ENCODE measurements at regions of chr6 and their contacts with region 1.

Region 1: DNA sequence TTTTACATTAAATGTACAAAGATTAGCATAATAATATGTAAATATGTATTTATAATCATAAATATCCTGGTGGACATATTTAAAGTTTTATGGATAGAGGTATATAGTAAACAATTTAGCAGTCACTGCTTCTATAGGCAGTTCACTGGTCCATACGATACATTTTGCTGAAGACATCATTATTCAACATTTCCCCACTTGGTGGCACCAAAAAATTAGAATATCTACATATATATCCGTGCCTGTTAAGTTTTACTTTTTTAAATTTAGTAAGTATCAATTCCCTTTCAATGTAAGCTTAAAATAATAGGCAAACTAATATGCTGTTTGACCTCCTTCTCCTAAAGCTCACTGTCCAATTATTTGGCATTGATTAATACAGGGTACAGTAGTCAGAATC is 64.2 kb downstream of the LMBRD1 start:
- DNase-seq: no peak
- ATAC-seq: peak in 1 of 2 donors; percentile 45
- H3K4me3 ChIP-seq: no peak overlapping the region
- H3K27ac ChIP-seq: no peak overlapping the region
- H3K4me1 ChIP-seq: peaks cover 10 to 17% of the 10 kb centered on the region in 2 donors
- H3K27me3 ChIP-seq: no peaks in the 10 kb centered on the region
- CTCF ChIP-seq: no peak
- POLR2A ChIP-seq: no peak

Region 2: DNA sequence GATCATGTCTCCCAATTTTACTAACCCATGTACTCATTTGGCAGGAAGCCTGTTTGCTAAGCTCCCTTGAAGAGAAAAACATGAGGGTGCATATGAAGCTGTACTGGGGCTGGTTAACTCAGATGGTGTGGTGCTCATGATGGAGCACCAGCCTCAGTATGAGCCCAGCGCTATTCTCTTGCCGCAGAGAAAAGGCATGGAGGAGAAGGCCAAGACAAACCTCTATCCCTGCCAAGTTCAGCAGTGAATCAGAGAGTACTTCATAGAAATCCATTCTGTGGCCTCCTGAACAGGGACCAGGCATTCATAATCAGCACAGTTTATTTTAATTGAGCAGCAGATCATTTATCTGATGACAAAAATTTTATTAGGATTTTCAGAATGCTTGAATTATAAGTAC is 333.9 kb before region 1 on chr6:
- in situ Hi-C with region 1: no loop called
- intact Hi-C with region 1: no loop called
- DNase-seq: no peak
- ATAC-seq: no peak
- H3K4me3 ChIP-seq: no peak overlapping the region
- H3K27ac ChIP-seq: no peak overlapping the region
- H3K4me1 ChIP-seq: no peaks in the 10 kb centered on the region
- H3K27me3 ChIP-seq: no peaks in the 10 kb centered on the region
- CTCF ChIP-seq: no peak
- POLR2A ChIP-seq: no peak

Region 3: DNA sequence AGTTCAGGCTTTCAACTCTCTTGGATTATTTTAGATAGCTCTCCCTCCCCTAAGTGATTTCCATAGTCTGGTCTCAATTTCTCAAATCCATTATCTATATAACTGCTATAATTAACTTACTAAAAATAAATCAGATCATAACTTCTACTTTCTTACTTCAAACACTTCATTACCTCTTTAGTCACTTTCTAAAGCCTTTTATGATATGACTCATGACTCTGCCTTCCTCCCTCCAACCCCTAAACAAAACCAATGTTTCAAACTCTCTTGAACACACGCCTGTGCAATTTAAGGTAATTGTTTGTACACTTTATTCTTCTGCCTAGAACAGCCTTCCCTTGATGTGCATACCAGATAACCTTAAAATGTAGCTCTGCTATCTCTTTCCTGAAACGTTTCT is 36.4 kb before region 1 on chr6:
- in situ Hi-C with region 1: no loop called
- intact Hi-C with region 1: no loop called
- DNase-seq: no peak
- ATAC-seq: no peak
- H3K4me3 ChIP-seq: no peak overlapping the region
- H3K27ac ChIP-seq: no peak overlapping the region
- H3K4me1 ChIP-seq: no peaks in the 10 kb centered on the region
- H3K27me3 ChIP-seq: no peaks in the 10 kb centered on the region
- CTCF ChIP-seq: no peak
- POLR2A ChIP-seq: no peak

Region 4: GRCh38 chr6:69791065-69791471 is 58.4 kb after region 1 on chr6:
- in situ Hi-C with region 1: no loop called
- intact Hi-C with region 1: loop called (anchors 5 kb)
- DNase-seq: no peak
- ATAC-seq: peak; percentile 51 to 56
- H3K4me3 ChIP-seq: no peak overlapping the region
- H3K27ac ChIP-seq: peak overlapping the region; percentile 67 to 77 (median 74)
- H3K4me1 ChIP-seq: peaks cover 44 to 53% of the 10 kb centered on the region in 2 donors
- H3K27me3 ChIP-seq: no peaks in the 10 kb centered on the region
- CTCF ChIP-seq: no peak
- POLR2A ChIP-seq: no peak

Region 5: DNA sequence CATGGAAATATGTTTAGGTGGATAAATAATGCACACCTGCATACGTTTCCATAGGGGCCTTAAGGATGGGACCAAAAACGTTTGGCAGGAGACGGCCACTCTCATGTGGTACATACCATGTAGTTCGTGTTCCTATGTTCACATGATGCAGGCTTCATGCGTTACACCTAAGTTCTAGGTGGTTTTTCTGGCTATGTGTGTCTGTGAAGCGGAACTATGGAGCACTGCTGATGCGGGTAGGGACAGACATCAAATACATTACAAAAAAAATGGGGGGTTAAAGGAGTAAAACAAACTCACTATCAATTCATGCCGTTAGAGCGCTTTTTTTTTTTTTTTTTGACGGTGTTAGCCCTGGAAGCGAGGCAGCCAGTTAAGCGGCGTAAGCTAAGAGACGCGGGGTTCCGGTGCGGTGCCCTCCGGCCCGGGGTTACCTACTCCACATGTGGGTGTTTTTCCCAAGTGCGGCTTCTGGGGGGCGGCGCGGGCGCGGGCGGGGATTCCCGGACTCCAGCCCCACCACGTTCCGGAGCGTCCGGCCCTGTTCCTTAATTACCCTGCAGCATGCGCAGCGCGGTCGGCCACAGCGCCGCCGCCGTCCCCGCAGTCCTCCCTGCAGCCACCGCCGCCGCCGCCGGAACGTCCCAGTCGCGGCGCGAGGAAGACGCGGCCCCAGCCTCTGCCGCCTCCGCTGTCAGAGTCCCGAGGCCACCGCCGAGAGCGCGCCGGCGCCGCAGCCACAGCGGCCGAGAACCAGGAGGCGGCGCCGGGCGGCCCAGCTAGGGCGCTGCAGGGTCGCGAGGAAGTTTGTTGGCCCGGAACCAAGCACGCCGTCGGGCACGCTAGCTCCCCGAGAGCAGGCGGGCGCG is 134.4 kb after region 1 on chr6:
- in situ Hi-C with region 1: no loop called
- intact Hi-C with region 1: no loop called
- DNase-seq: peak in 1 of 2 donors; percentile 21
- ATAC-seq: peak; percentile 73 to 83
- H3K4me3 ChIP-seq: peak overlapping the region; percentile 54 to 69 (median 64)
- H3K27ac ChIP-seq: no peak overlapping the region
- H3K4me1 ChIP-seq: peaks cover 5 to 12% of the 10 kb centered on the region in 2 donors
- H3K27me3 ChIP-seq: no peaks in the 10 kb centered on the region
- CTCF ChIP-seq: peak in 1 of 5 experiments; percentile 27
- POLR2A ChIP-seq: no peak